ENCODE measurements at regions of chr3 and their contacts with region 1.

Region 1: GRCh38 chr3:42839616-42840015 is 30.4 kb downstream of the ACKR2 start:
- DNase-seq: peak; percentile 67
- H3K4me3 ChIP-seq: no peak overlapping the region
- H3K27ac ChIP-seq: no peak overlapping the region
- H3K4me1 ChIP-seq: no peaks in the 10 kb centered on the region
- H3K27me3 ChIP-seq: peaks cover 0 to 7% of the 10 kb centered on the region in 2 experiments
- CTCF ChIP-seq: peak; percentile 44 to 56
- POLR2A ChIP-seq: no peak

Region 2: GRCh38 chr3:41488501-41488900 is 1351.1 kb before region 1 on chr3:
- CTCF ChIA-PET with region 1: no interaction called
- POLR2A ChIA-PET with region 1: no interaction called
- dilution Hi-C with region 1: no loop called
- intact Hi-C with region 1: no loop called
- DNase-seq: no peak
- H3K4me3 ChIP-seq: no peak overlapping the region
- H3K27ac ChIP-seq: no peak overlapping the region
- H3K4me1 ChIP-seq: no peaks in the 10 kb centered on the region
- H3K27me3 ChIP-seq: peaks cover 0 to 2% of the 10 kb centered on the region in 2 experiments
- CTCF ChIP-seq: no peak
- POLR2A ChIP-seq: no peak

Region 3: DNA sequence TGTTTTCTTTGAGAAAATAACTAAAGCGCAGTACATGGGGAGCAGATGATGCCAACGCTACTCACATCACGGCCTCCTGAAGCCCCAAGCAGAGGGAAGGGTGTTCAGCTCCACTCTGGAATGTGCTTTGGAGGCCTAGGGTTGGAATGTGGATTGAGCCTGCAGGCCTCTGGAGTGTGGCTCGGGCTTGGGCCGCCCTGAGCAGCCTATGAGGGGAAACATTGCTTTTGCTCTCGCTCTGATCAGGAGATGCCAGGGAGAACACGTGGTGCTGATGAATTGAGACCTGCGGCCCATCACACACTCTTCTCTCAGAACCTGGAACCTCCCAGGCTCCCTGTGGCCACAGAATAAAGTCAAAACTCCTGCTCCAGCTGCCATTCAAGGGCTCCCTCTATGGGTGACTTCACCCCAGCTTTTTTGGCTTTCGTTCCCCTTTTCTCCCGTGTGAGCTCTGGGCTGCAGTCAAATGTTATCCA is 89.8 kb before region 1 on chr3:
- CTCF ChIA-PET with region 1: interaction called, 12 read pairs
- POLR2A ChIA-PET with region 1: no interaction called
- dilution Hi-C with region 1: no loop called
- intact Hi-C with region 1: no loop called
- DNase-seq: no peak
- H3K4me3 ChIP-seq: no peak overlapping the region
- H3K27ac ChIP-seq: no peak overlapping the region
- H3K4me1 ChIP-seq: no peaks in the 10 kb centered on the region
- H3K27me3 ChIP-seq: peaks cover 0 to 2% of the 10 kb centered on the region in 2 experiments
- CTCF ChIP-seq: peak in 1 of 2 donors; percentile 6
- POLR2A ChIP-seq: no peak

Region 4: DNA sequence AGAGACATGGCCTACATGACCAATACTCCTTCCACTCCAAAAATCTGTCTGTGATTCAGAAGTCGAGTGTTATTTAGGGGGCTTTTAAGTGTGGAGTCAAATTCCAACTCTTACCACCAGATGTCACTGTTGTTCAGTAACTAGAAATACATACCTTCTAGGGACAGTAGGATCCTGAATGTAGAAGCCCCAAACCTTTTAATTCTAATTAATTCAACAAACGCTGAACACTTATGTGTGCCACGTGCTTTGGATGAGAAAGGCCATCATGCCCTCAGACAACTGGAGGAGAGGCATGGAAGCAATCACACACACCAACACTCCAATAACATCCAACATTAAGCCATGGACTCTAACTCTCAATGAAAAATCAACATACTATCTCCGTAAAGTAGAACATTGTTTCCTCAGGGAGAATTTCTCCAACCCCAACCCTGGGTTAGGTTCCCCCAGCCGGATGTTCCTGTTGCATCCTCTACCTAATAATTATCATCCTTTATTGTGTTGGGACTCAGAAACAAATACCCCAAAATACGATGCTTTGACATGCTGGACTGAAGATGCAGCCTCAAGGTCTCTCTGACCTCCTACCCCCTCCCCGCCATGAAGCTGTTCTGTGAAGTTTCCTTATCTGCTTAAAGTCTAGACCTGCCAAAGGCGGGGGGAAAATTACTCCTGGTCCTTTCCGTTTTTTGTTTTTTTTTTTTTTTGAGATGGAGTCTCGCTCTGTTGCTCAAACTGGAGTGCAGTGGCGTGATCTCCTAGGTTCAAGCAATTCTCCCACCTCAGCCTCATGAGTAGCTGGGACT is 58.5 kb before region 1 on chr3:
- CTCF ChIA-PET with region 1: interaction called, 24 read pairs
- POLR2A ChIA-PET with region 1: no interaction called
- dilution Hi-C with region 1: no loop called
- intact Hi-C with region 1: loop called (anchors 1 kb)
- DNase-seq: peak; percentile 78
- H3K4me3 ChIP-seq: no peak overlapping the region
- H3K27ac ChIP-seq: no peak overlapping the region
- H3K4me1 ChIP-seq: no peaks in the 10 kb centered on the region
- H3K27me3 ChIP-seq: no peaks in the 10 kb centered on the region
- CTCF ChIP-seq: peak; percentile 56 to 64
- POLR2A ChIP-seq: no peak

Region 5: GRCh38 chr3:42786212-42786611 is 53.4 kb before region 1 on chr3:
- CTCF ChIA-PET with region 1: interaction called, 24 read pairs
- POLR2A ChIA-PET with region 1: no interaction called
- dilution Hi-C with region 1: no loop called
- intact Hi-C with region 1: loop called (anchors 1 kb)
- DNase-seq: no peak
- H3K4me3 ChIP-seq: no peak overlapping the region
- H3K27ac ChIP-seq: no peak overlapping the region
- H3K4me1 ChIP-seq: no peaks in the 10 kb centered on the region
- H3K27me3 ChIP-seq: no peaks in the 10 kb centered on the region
- CTCF ChIP-seq: no peak
- POLR2A ChIP-seq: no peak

Region 6: DNA sequence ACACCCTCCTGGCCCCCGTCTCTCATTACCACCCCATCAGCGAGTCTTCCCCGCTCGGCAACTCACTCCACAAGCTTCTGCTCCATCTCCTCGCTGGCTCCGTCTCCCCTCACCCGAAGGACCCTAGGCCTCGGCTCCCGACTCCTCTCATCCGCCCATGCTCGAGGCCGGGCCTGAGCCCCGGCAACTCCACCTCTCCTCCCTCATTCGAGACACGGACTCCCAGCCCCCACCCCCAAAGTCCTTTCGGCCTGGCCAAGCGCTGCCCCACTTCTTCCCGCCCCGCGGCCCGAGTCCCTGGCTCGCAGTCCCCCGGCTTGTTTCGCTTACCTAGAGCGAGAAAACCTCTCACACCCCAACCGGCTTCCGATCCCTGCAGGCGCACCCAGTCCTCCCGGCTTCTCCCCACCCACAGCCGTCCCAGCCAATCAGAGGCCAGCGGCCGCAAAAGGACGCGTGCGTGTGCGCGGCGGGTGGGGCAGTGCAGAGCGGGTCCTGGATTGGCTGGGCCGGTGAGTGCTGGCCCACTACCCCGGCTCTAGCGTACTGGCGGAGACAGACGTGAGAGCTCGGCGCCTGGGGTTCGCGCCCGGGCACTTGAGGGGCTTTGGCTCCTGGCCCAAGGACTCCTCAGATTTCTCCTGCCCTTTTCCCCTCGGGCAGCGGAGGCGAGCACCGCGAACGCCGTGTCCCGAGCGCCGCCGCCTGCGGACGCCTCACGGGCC is 35.3 kb before region 1 on chr3 and contains the start of gene HIGD1A:
- CTCF ChIA-PET with region 1: interaction called, 11 read pairs
- POLR2A ChIA-PET with region 1: no interaction called
- dilution Hi-C with region 1: no loop called
- intact Hi-C with region 1: no loop called
- DNase-seq: peak; percentile 96
- H3K4me3 ChIP-seq: peak within 1 kb of the TSS; percentile 11 to 77 (median 52)
- H3K27ac ChIP-seq: peak within 1 kb of the TSS; percentile 39
- H3K4me1 ChIP-seq: peaks cover 11% of the 10 kb centered on the region
- H3K27me3 ChIP-seq: peaks cover 2 to 10% of the 10 kb centered on the region in 2 experiments
- CTCF ChIP-seq: no peak
- POLR2A ChIP-seq: peak; percentile 67
- total RNA-seq, gene HIGD1A: 68.9 and 71.8 TPM in 2 replicates

Region 7: GRCh38 chr3:42852441-42852840 is 12.8 kb after region 1 on chr3:
- CTCF ChIA-PET with region 1: interaction called, 27 read pairs
- POLR2A ChIA-PET with region 1: no interaction called
- dilution Hi-C with region 1: no loop called
- intact Hi-C with region 1: no loop called
- DNase-seq: no peak
- H3K4me3 ChIP-seq: no peak overlapping the region
- H3K27ac ChIP-seq: no peak overlapping the region
- H3K4me1 ChIP-seq: no peaks in the 10 kb centered on the region
- H3K27me3 ChIP-seq: peaks cover 1 to 7% of the 10 kb centered on the region in 2 experiments
- CTCF ChIP-seq: no peak
- POLR2A ChIP-seq: no peak